ENCODE measurements at regions of chr13 and their contacts with region 1.

Region 1: GRCh38 chr13:26362261-26362660 is 108.3 kb downstream of the CDK8 start:
- DNase-seq: no peak
- ATAC-seq: no peak
- H3K4me3 ChIP-seq: no peak overlapping the region
- H3K4me3 Mint-ChIP-seq: no peak overlapping the region
- H3K27ac ChIP-seq: no peak overlapping the region
- H3K27ac Mint-ChIP-seq: no peak overlapping the region
- H3K4me1 ChIP-seq: no peaks in the 10 kb centered on the region
- H3K4me1 Mint-ChIP-seq: no peaks in the 10 kb centered on the region
- H3K27me3 ChIP-seq: no peaks in the 10 kb centered on the region
- H3K27me3 Mint-ChIP-seq: no peaks in the 10 kb centered on the region

Region 2: DNA sequence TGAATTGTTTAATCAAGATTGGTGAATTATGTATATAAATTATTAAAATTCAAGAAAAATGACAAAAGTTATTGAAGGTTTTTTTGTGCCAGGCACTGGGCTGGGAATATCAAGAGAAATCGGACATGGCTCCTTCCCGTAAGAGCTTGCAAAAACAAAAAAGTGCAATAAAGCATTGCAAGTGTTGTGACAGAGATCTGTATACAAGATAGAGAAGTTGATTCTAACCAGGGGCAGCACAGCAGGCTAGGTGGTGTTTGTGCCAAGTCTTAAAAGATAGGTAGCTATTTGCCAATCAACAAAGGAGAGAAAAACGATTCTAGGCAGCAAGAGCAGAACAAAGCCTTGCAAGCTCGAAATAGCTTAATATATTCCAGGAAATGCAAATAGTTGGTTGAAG is 71.5 kb after region 1 on chr13:
- CTCF ChIA-PET with region 1: no interaction called
- POLR2A ChIA-PET with region 1: interaction called in 1 of 2 experiments, 13 read pairs
- DNase-seq: no peak
- ATAC-seq: no peak
- H3K4me3 ChIP-seq: no peak overlapping the region
- H3K4me3 Mint-ChIP-seq: no peak overlapping the region
- H3K27ac ChIP-seq: no peak overlapping the region
- H3K27ac Mint-ChIP-seq: no peak overlapping the region
- H3K4me1 ChIP-seq: no peaks in the 10 kb centered on the region
- H3K4me1 Mint-ChIP-seq: no peaks in the 10 kb centered on the region
- H3K27me3 ChIP-seq: no peaks in the 10 kb centered on the region
- H3K27me3 Mint-ChIP-seq: peaks cover 4 to 10% of the 10 kb centered on the region in 2 donors